MCF 10A (cell line): ENCODE measurements at regions of chr1 and their contacts with region 1.

Region 1: DNA sequence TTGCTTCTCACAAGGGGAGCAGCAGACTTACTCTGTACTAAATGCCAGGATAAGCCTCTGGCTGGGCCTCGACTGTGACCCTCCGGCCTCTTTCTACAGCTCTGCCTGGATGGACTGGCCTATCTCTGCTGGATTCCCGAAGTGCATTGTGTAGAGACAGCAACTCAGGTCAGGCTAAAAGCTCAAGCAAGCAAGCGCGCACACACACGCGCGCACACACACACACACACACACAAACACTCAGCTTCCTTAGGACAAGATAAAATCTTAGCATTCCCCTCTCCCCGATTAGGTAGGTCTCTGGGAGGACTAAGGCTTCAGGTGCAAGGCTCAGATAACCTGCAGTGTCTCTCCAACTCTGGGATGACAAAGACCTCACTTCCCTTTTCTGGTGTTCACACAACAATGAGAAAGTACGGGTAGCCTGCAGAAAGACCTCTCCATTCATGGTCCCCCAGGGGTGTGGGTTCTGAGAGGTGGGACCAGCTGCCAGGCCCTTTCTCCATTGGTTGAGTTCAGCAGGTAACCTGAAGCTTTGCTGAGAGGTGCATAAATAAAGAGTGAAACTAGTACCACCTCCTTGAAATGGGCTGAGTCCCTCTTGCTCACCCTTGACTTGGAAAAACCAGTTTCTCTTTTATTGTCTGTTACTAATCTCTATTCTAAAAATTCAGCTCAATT is 155.1 kb upstream of the CAMK1G start:
- DNase-seq: peak; percentile 99
- H3K4me3 Mint-ChIP-seq: peak overlapping the region; percentile 93
- H3K27ac Mint-ChIP-seq: peak overlapping the region; percentile 90
- H3K4me1 Mint-ChIP-seq: peaks cover 60% of the 10 kb centered on the region
- H3K27me3 Mint-ChIP-seq: no peaks in the 10 kb centered on the region
- CTCF ChIP-seq: no peak

Region 2: GRCh38 chr1:209229494-209230059 is 198.8 kb before region 1 on chr1:
- CTCF ChIA-PET with region 1: no interaction called
- POLR2A ChIA-PET with region 1: interaction called, 15 read pairs
- intact Hi-C with region 1: no loop called
- DNase-seq: peak; percentile 87
- H3K4me3 Mint-ChIP-seq: no peak overlapping the region
- H3K27ac Mint-ChIP-seq: no peak overlapping the region
- H3K4me1 Mint-ChIP-seq: peaks cover 13% of the 10 kb centered on the region
- H3K27me3 Mint-ChIP-seq: no peaks in the 10 kb centered on the region
- CTCF ChIP-seq: no peak

Region 3: GRCh38 chr1:209389258-209389657 is 39.1 kb before region 1 on chr1:
- CTCF ChIA-PET with region 1: interaction called, 1,242 read pairs
- POLR2A ChIA-PET with region 1: interaction called, 6,956 read pairs
- intact Hi-C with region 1: loop called (anchors 1 kb)
- DNase-seq: peak; percentile 99
- H3K4me3 Mint-ChIP-seq: peak overlapping the region; percentile 22
- H3K27ac Mint-ChIP-seq: peak overlapping the region; percentile 79
- H3K4me1 Mint-ChIP-seq: peaks cover 45% of the 10 kb centered on the region
- H3K27me3 Mint-ChIP-seq: no peaks in the 10 kb centered on the region
- CTCF ChIP-seq: no peak

Region 4: DNA sequence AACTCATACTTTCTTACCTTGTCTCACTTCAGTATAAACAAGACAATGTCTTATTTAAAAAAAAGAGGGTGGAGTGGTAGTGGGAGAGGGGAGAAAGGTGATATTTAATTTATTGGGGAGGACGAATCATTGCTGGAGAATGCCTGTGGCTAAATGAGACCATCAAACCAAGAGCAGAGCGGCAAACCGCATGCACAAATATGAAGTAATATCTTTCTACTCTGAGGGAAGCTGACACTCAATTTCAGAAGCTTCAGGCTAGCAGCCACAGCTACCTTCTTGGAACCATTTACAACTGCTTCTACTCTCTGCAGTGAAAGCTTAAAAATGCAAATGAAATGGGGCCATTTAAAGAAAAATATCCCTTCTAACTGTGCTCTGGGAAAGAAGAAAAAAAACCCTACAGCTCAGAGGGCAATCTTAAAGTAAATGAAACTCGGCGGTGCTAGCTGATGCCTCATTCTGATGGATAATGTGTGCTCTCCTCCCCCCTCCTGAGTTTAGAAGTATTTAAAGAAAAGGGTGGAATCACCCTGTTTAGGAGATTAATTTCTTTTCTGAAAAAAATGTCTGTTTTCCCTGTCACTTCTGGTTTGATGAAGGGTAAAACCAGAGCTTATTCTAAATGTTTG is 23.1 kb before region 1 on chr1:
- CTCF ChIA-PET with region 1: interaction called, 368 read pairs
- POLR2A ChIA-PET with region 1: interaction called, 2,930 read pairs
- intact Hi-C with region 1: loop called (anchors 2 kb)
- DNase-seq: peak; percentile 81
- H3K4me3 Mint-ChIP-seq: peak overlapping the region; percentile 17
- H3K27ac Mint-ChIP-seq: no peak overlapping the region
- H3K4me1 Mint-ChIP-seq: peaks cover 16% of the 10 kb centered on the region
- H3K27me3 Mint-ChIP-seq: no peaks in the 10 kb centered on the region
- CTCF ChIP-seq: no peak

Region 5: GRCh38 chr1:209534496-209535250 is 106.3 kb after region 1 on chr1:
- CTCF ChIA-PET with region 1: interaction called, 5 read pairs
- POLR2A ChIA-PET with region 1: interaction called, 86 read pairs
- intact Hi-C with region 1: no loop called
- DNase-seq: no peak
- H3K4me3 Mint-ChIP-seq: no peak overlapping the region
- H3K27ac Mint-ChIP-seq: no peak overlapping the region
- H3K4me1 Mint-ChIP-seq: peaks cover 55% of the 10 kb centered on the region
- H3K27me3 Mint-ChIP-seq: no peaks in the 10 kb centered on the region
- CTCF ChIP-seq: no peak